GM10248 (cell line): ENCODE measurements at regions of chr1 and their contacts with region 1.

Region 1: DNA sequence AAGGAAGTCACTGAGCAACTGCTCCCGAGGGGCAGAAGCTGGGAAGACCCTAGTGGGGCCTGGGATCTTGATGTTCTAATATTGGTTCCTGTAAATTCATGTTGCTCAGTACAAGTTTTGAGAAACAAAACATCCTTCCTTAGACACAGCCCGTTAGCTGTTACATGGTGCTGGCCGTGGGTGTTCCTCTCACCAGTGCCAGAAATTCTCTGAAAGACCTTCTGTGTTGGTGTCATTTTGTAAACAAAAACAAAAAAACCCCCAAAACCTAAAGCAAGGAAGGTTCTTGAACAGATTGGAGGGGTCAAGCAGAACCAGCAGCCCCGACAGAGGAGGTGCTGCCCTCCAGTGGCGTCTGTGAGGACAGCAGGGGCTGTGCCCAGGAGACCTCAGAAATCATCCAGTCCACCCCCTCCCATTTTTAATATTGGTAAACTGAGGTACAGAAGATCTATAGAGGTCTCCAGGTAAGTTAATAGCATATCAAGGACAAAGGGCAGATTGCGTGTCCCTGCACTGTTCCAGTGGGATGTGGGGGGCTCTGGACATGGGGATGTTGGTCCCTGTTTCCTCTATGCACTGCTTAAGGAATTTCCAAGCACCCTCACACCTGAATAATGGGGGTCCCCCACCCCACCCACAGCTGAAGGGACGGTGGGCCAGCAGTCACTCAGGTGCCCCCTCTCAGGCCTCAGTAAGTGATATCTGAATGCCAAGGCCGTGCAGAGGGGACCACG is 38.2 kb downstream of the SLC2A7 start:
- DNase-seq: peak; percentile 82
- CTCF ChIP-seq: peak; percentile 96

Region 2: GRCh38 chr1:8910914-8911313 is 77.1 kb before region 1 on chr1:
- CTCF ChIA-PET with region 1: interaction called, 17 read pairs
- POLR2A ChIA-PET with region 1: no interaction called
- DNase-seq: no peak
- CTCF ChIP-seq: no peak

Region 3: DNA sequence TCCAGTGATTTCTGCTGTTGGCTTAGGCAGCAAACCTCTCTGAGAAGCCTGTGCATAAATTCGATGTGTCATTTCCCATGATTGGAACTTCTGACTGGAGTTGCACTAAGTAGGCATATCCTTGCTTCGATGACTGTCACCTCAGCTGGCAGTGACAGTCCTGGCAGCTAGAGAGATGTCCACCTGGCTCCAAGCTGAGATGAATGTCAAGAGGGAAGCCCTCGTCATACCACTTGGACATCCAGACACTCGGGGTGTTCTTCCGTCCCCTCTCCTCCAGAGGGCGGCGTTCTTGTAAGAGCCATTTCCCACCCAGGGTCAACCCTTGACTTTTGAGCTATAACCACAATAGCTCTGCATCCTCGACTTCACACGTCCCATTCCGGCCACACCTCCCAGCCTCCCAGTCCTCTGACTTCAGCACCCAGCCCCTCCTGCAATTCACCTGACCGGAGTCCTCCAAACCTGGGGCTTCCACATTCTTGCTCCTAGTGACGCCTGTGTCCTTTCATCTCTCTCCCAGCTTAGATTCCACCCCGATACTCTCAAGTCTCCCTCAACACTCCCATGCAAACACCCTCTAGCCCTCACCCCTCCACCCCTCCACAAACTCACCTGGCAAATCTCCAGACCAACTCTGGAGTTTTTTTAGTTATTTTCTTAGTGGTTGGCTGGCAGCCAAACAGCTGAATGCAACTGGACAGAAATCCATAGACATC is 25.1 kb before region 1 on chr1:
- CTCF ChIA-PET with region 1: interaction called, 32 read pairs
- POLR2A ChIA-PET with region 1: no interaction called
- DNase-seq: peak; percentile 78
- CTCF ChIP-seq: peak; percentile 45